MCF 10A (cell line): ENCODE measurements at regions of chr6 and their contacts with region 1.

Region 1: DNA sequence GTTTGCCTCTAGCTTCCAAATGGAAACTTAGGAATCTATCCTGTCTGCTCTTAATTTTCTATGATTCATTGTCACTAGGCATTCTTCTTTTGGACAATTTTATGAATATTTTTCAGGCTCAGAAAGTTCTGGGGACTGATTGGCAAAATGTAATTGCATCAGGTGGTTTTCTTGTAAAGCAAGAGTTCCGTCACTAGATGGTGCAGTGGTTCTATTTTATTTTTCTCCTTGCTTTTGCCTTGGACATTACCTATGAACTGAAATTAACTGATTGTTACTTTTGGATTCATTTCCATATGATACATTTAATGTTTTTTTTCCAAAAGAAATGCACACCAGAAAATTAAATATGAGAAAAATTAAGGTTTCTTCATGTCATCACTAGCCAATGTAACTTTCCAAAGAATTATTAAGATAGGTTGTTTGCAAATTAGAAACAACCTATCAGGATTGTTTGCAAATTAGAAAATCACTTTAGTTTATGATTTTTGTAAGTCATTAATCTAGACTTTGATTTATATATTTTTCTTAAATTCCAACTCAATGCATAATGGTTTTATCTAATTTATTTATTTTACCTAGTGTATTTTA is 48.0 kb downstream of the TMEM170B start:
- DNase-seq: peak; percentile 61
- H3K4me3 Mint-ChIP-seq: no peak overlapping the region
- H3K27ac Mint-ChIP-seq: no peak overlapping the region
- H3K4me1 Mint-ChIP-seq: no peaks in the 10 kb centered on the region
- H3K27me3 Mint-ChIP-seq: no peaks in the 10 kb centered on the region
- CTCF ChIP-seq: peak; percentile 60

Region 2: GRCh38 chr6:11251541-11252360 is 333.8 kb before region 1 on chr6:
- CTCF ChIA-PET with region 1: no interaction called
- POLR2A ChIA-PET with region 1: no interaction called
- intact Hi-C with region 1: no loop called
- DNase-seq: peak; percentile 70
- H3K4me3 Mint-ChIP-seq: no peak overlapping the region
- H3K27ac Mint-ChIP-seq: peak overlapping the region; percentile 71
- H3K4me1 Mint-ChIP-seq: peaks cover 14% of the 10 kb centered on the region
- H3K27me3 Mint-ChIP-seq: no peaks in the 10 kb centered on the region
- CTCF ChIP-seq: no peak

Region 3: DNA sequence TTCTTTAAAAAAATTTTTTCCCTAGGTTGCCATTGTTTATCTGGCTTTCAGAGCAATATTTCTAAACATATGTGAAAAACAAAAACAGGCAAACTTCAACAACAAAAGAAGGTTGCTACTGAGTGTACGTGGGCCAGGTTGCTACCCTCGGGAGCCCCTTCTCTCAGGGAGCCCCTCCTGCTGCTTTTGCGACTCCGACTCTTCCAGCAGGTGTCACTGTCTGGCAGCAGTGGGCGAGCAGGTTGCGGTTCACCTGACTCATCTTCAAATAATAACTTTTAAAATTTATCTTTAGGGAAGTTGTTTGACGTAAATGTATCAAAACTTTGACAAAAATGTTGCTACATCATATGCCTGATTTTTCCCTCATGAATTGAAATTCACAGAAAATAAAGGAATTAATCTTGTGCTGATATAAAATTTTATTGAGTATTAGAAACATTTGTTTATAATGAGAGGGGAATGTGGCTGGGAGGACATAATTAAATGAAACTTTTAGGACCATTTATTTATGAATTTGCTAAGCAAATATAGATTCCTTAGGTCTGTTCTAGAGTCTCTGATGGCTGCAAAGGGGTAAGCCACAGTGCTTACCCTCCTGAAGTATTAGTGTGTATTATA is 565.4 kb after region 1 on chr6:
- CTCF ChIA-PET with region 1: interaction called, 3 read pairs
- POLR2A ChIA-PET with region 1: no interaction called
- intact Hi-C with region 1: loop called (anchors 5 kb)
- DNase-seq: peak; percentile 57
- H3K4me3 Mint-ChIP-seq: no peak overlapping the region
- H3K27ac Mint-ChIP-seq: no peak overlapping the region
- H3K4me1 Mint-ChIP-seq: peaks cover 17% of the 10 kb centered on the region
- H3K27me3 Mint-ChIP-seq: no peaks in the 10 kb centered on the region
- CTCF ChIP-seq: peak; percentile 69

Region 4: DNA sequence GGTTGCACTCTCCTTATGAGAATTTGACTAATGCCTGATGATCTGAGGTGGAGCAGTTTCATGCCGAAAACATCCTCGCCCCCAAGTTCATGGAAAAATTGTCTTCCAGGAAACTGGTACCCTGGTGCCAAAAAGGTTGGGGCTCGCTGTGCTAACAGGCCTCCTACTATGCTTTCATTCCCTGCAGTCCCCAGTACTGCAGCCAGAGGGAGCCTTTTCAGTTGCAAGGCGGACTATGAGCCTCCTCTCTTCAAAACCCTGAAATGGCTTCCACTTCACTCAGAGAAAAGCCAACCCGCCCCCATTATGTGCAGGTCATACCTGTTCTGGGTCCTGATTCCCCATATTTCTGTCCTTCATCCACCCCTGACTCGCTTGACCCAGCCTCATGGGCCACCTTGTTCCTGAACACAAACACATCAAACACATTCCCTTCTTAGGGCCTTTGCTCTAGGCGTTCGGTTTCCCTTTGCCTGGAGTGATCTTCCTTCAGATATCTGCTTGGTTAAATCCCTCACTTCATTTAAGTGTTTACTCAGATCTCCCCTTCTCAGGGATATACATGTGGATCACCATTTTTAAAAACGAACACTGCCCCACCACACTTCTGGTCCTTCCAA is 1304.8 kb after region 1 on chr6:
- CTCF ChIA-PET with region 1: interaction called, 4 read pairs
- POLR2A ChIA-PET with region 1: no interaction called
- intact Hi-C with region 1: loop called (anchors 1 kb)
- DNase-seq: peak; percentile 13
- H3K4me3 Mint-ChIP-seq: no peak overlapping the region
- H3K27ac Mint-ChIP-seq: no peak overlapping the region
- H3K4me1 Mint-ChIP-seq: no peaks in the 10 kb centered on the region
- H3K27me3 Mint-ChIP-seq: peaks cover 39% of the 10 kb centered on the region
- CTCF ChIP-seq: peak; percentile 34